Activated CD4-positive, alpha-beta T cell treated with anti-CD3 and anti-CD28 coated beads for 36 hours (primary cell): ENCODE measurements at regions of chr15 and their contacts with region 1.

Region 1: GRCh38 chr15:74453925-74454763 is 6.8 kb downstream of the UBL7 start:
- DNase-seq: no peak
- ATAC-seq: peak; percentile 42
- H3K4me3 Mint-ChIP-seq: no peak overlapping the region
- H3K27ac Mint-ChIP-seq: no peak overlapping the region
- H3K4me1 Mint-ChIP-seq: peaks cover 22% of the 10 kb centered on the region
- H3K27me3 Mint-ChIP-seq: no peaks in the 10 kb centered on the region

Region 2: GRCh38 chr15:74489518-74490338 is 35.6 kb after region 1 on chr15:
- CTCF ChIA-PET with region 1: interaction called, 3 read pairs
- POLR2A ChIA-PET with region 1: no interaction called
- intact Hi-C with region 1: loop called in 1 of 2 experiments (anchors 5 kb)
- DNase-seq: peak; percentile 85
- ATAC-seq: peak; percentile 92
- H3K4me3 Mint-ChIP-seq: no peak overlapping the region
- H3K27ac Mint-ChIP-seq: no peak overlapping the region
- H3K4me1 Mint-ChIP-seq: peaks cover 12% of the 10 kb centered on the region
- H3K27me3 Mint-ChIP-seq: no peaks in the 10 kb centered on the region

Region 3: GRCh38 chr15:74535388-74536084 is 81.4 kb after region 1 on chr15:
- CTCF ChIA-PET with region 1: no interaction called
- POLR2A ChIA-PET with region 1: no interaction called
- intact Hi-C with region 1: no loop called
- DNase-seq: no peak
- ATAC-seq: no peak
- H3K4me3 Mint-ChIP-seq: no peak overlapping the region
- H3K27ac Mint-ChIP-seq: no peak overlapping the region
- H3K4me1 Mint-ChIP-seq: peaks cover 5% of the 10 kb centered on the region
- H3K27me3 Mint-ChIP-seq: no peaks in the 10 kb centered on the region